H1 (cell line): ENCODE measurements at regions of chr1 and their contacts with region 1.

Region 1: DNA sequence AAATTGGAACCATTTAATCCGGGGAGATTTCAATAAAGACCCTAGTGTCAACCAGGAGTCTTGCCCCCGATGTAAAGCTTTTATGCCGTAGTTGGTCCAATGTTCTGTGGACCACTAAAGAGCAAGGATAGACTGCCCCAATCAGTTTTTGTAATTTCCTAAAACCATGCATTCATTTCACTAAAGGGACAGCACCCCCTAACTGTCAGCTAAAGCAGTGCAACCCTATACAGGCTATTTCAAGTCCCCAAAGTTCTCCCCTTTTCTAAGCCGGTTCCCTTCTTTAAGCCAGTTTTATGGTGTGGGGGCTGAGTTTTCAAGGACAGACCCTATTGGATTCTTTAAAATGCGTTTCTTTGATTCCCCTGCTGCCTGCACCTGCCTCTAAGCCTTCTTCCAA is 12.7 kb upstream of the PDPN start:
- DNase-seq: no peak
- H3K4me3 ChIP-seq: no peak overlapping the region
- H3K27ac ChIP-seq: no peak overlapping the region
- H3K4me1 ChIP-seq: no peaks in the 10 kb centered on the region
- H3K27me3 ChIP-seq: no peaks in the 10 kb centered on the region
- CTCF ChIP-seq: peak in 2 of 3 experiments; percentile 47 to 72; a peak in 2 of 4 replicates
- EP300 ChIP-seq: no peak
- POLR2A ChIP-seq: no peak
- RAD21 ChIP-seq: peak; percentile 43 to 58; a peak in 3 of 4 replicates

Region 2: DNA sequence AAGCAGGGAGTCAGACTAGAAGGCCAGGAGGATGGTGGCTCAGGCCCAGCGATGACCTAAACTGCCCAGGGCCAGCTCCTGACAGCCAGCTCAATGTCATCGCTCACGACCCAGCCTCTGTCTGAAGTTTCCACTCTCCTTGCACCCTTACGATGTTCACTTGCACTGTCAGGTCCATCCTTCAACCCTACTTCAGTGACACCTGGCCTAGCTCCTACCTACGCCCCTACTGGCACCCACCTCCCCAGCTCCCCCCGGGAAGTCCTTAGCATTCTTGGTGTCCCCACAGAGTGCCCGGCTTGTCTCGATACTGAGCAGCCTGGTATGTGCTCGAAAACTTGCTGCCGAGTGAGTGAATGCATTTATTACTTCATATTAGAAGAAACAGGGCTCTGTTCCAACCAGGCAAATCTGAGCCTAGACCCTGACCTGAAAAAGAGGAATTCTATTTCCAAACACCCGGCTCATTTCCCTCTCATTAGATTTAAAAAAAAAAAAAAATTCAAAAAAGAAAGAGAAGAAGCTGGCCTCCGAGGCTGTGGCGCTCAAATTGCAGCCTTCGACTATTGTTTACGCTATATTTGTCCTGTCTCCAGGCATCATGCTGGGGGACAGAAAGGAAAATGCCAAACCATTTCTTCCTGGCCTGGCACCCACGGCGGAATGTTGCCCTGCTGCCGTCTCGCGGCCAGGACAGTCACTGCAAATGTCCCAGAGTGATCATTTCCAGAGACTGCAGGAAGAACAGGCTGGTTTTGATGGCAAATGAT is 27.3 kb before region 1 on chr1:
- CTCF ChIA-PET with region 1: interaction called, 16 read pairs
- POLR2A ChIA-PET with region 1: no interaction called
- DNase-seq: no peak
- H3K4me3 ChIP-seq: no peak overlapping the region
- H3K27ac ChIP-seq: no peak overlapping the region
- H3K4me1 ChIP-seq: no peaks in the 10 kb centered on the region
- H3K27me3 ChIP-seq: no peaks in the 10 kb centered on the region
- CTCF ChIP-seq: peak; percentile 9 to 25 (median 13); a peak in 3 of 4 replicates
- EP300 ChIP-seq: no peak
- POLR2A ChIP-seq: no peak
- RAD21 ChIP-seq: peak in 1 of 2 experiments; percentile 35; a peak in 2 of 4 replicates

Region 3: GRCh38 chr1:13556219-13556802 is 14.6 kb before region 1 on chr1:
- CTCF ChIA-PET with region 1: interaction called, 16 read pairs
- POLR2A ChIA-PET with region 1: no interaction called
- DNase-seq: no peak
- H3K4me3 ChIP-seq: no peak overlapping the region
- H3K27ac ChIP-seq: no peak overlapping the region
- H3K4me1 ChIP-seq: no peaks in the 10 kb centered on the region
- H3K27me3 ChIP-seq: no peaks in the 10 kb centered on the region
- CTCF ChIP-seq: no peak
- EP300 ChIP-seq: no peak
- POLR2A ChIP-seq: no peak
- RAD21 ChIP-seq: no peak

Region 4: DNA sequence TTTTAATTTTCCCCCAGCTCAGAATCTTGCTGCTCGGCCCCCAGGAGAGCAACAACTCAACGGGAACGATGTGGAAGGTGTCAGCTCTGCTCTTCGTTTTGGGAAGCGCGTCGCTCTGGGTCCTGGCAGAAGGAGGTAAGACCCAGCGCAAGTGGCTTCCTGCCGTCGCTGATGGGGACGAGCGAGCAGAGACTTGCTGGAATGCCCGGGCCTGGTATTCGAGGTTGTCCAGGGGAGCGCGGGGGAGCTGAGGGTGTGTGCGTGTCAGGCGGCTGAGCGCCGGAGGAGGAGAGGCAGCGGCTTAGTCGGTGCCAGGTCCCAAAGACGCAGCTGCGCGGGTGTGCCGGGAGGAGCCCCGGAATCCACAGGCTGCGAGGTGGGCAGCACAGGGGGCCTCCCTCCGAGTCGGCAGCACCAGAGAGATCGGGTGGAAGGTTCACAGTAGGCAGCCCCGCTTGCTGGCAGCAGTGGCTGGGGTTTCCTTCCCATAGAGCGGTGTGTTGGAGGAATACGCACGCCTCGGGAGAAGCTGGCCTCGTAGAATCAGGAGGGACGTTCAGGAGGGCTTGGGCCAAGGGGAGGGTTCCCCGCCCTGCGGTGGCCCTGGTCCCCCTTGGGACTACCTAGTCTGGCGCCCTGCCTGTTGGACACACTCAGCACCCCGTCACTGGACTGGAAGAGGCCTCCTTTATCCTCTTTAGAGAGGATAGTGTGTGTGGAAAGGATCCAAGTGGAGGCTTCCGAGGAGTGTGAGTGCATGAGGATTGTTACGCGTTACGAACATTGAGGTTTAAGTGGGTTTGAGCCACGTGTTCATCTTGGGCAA is 13.3 kb after region 1 on chr1:
- CTCF ChIA-PET with region 1: interaction called, 27 read pairs
- POLR2A ChIA-PET with region 1: interaction called, 3 read pairs
- DNase-seq: peak in 1 of 2 experiments; percentile 56
- H3K4me3 ChIP-seq: peak overlapping the region; percentile 80 to 100 (median 88)
- H3K27ac ChIP-seq: peak overlapping the region; percentile 52
- H3K4me1 ChIP-seq: peaks cover 9 to 41% (median 29%) of the 10 kb centered on the region in 4 experiments
- H3K27me3 ChIP-seq: peaks cover 0 to 3% (median 0%) of the 10 kb centered on the region in 4 experiments; a peak in 3 of 7 replicates
- CTCF ChIP-seq: no peak
- EP300 ChIP-seq: no peak
- POLR2A ChIP-seq: no peak
- RAD21 ChIP-seq: no peak

Region 5: DNA sequence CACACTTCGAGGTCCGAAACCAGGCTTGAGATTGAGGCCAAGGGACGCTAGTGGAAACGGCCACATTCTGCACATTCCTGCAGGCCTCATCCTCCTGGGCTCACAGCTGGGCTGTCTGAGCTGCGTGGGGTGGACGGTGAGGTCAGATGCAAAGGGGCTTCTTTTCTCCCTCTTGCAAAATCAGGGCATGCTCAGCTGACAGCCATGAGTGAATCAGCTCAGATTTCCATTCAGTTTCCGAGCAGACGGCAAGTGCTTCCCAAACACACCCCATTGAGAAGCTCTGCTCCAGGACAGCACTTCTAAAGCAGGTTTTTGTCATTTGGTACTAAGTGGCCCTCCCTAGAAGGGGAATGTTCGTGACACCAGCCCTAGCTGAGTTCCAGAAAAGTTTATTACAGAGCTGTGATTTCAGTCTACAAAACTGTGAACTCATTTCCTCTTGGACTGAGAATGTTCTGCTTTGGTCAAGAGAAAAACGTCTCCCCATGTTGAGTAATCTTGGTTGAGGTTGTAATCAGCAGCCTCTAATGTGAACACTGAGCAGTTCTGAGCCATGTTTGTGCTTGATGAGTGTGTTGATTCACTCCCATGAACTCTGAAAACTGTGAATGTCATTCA is 22.7 kb after region 1 on chr1:
- CTCF ChIA-PET with region 1: interaction called, 19 read pairs
- POLR2A ChIA-PET with region 1: interaction called, 3 read pairs
- DNase-seq: no peak
- H3K4me3 ChIP-seq: no peak overlapping the region; a peak in 1 of 8 replicates
- H3K27ac ChIP-seq: no peak overlapping the region
- H3K4me1 ChIP-seq: peaks cover 3 to 15% (median 7%) of the 10 kb centered on the region in 4 experiments
- H3K27me3 ChIP-seq: no peaks in the 10 kb centered on the region; a peak in 1 of 7 replicates
- CTCF ChIP-seq: no peak
- EP300 ChIP-seq: no peak
- POLR2A ChIP-seq: no peak
- RAD21 ChIP-seq: no peak